ENCODE measurements at regions of chr3 and their contacts with region 1.

Region 1: DNA sequence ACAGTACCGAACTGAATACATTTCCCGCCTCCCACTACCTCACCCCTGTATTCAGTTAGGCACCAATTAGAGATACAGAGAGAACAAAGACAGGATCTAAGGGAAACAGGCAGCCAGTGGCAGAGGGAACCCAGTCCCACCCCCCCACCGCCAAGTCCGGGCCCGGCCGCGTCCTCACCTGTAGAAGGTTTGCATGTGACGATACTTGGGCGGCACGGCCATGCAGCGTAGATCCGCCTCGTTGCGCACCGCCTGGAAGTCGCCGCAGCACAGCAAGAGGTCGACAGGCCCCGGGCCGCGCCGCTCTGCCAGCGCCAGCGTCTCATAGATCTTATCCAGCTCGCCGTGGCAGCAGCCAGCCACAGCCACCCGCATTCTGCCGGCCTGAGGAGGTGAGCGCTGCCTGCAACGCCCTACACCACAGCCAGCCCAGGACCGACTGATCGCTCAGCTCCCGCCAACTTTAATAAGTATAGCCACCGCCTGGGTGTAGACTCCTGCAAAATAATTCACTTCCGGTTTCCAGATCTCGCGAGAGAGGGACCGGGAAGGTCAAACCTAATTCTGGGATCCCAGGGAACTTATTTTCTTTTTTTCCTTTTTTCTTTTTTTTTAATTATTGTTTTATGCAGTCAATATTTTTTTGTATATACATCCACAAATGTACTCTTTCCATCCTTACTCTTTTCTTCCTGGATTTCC is at the start of gene DBR1:
- DNase-seq: peak; percentile 83
- ATAC-seq: peak; percentile 93
- H3K4me3 ChIP-seq: peak within 1 kb of the TSS; percentile 73
- H3K27ac ChIP-seq: peak within 1 kb of the TSS; percentile 61
- H3K4me1 ChIP-seq: 0 out of 2 replicates have a peak, but pooled peaks cover 5% of the 10 kb centered on the region
- H3K27me3 ChIP-seq: no peaks in the 10 kb centered on the region
- CTCF ChIP-seq: no peak
- total RNA-seq, gene DBR1: 10.0 and 14.0 TPM in 2 replicates

Region 2: DNA sequence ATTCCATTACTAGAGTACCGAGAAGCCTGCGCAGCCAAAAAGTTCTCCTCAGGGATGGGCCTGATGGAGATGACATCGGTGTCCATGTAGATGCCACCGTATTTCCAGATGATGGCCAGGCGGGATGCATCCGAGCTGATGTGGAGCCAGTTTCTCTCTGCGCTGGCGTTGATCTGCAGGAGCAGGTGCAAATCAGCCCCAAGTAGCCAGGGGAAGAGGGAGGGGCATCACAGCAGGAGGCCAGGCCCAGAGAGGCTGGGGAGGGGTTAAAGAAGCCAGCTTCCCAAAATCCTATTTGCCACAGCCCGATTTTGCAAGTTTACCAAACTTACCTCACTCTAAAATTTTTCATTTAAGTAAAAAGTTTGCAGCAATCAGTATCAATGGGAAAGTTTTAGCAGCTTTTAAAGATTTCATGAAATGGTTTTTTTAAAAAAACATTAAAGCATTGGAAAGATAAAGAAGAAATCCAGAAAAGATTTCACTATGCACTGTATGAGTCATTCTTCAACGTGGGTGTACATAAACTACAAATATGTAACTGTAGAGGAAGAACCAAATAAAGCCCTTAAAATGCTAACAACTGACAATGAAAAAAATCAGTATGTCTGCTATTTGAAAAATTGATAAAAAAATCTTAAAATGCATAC is 49.7 kb before region 1 on chr3:
- CTCF ChIA-PET with region 1: no interaction called
- POLR2A ChIA-PET with region 1: interaction called, 10 read pairs
- intact Hi-C with region 1: no loop called
- DNase-seq: no peak
- ATAC-seq: peak; percentile 67
- H3K4me3 ChIP-seq: no peak overlapping the region
- H3K27ac ChIP-seq: no peak overlapping the region
- H3K4me1 ChIP-seq: no peaks in the 10 kb centered on the region
- H3K27me3 ChIP-seq: no peaks in the 10 kb centered on the region
- CTCF ChIP-seq: no peak

Region 3: DNA sequence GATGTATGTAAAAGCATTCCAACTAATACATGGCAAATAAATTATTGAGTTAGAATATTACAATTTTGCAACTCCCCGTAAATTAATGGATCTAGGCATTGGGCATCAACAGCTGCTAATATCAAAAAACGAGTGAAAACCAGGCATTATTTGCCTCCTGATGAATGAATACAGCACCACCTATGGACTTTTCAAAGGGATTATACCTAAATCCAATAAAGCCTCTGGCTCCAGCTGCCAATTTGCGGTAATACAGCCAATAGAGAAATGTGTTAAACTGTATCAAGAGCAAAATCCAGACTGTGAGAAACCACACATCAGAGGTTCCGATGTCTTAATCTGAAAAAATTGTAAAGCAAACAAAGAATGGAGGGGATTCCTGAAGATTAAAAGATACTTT is 26.1 kb before region 1 on chr3:
- CTCF ChIA-PET with region 1: no interaction called
- POLR2A ChIA-PET with region 1: interaction called, 16 read pairs
- intact Hi-C with region 1: no loop called
- DNase-seq: peak; percentile 3
- ATAC-seq: 0 out of 2 replicates have a peak, but pooled peaks have one; percentile 31
- H3K4me3 ChIP-seq: no peak overlapping the region
- H3K27ac ChIP-seq: no peak overlapping the region
- H3K4me1 ChIP-seq: no peaks in the 10 kb centered on the region
- H3K27me3 ChIP-seq: no peaks in the 10 kb centered on the region
- CTCF ChIP-seq: 0 out of 2 replicates have a peak, but pooled peaks have one; percentile 25

Region 4: DNA sequence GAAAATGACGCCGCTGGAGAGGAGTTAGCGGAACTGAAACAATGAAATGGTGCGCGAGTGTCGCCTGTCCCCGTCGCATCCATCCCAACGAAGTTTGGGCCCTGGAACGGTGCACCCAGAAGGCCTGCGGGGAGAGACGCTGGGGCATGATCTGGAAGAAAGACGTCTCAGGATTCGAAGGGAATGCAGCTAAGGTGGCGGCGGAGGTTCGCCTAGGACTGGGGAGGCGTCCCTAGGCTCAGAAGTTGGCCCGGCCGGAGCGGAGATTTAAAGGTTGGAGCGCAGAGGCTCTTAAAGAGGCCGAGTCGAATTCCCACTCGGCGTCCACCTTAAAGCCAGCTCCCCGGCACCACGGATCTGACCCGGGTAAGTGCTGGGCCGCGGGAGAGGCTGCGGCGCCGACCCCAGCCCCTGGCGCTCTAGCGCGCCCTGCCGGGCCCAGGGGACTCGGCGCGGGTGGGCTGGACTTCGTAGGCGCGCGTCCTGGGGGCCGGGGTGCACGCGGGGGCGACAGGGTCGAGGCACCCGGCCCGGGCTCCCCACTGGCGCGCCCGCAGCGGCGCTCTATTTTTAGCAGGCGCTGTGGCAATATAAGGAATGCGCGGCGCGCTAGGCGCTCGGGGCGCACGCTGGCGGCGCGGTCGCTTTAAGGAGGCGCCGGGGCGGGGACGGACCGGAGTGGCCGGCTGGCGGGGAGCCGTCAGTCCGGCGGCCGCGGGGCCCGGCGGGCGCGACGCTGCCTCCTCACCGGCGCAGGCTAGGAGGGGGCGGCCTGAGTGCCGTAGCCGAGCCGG is 173.6 kb after region 1 on chr3 and contains the start of gene MRAS:
- CTCF ChIA-PET with region 1: interaction called, 4 read pairs
- POLR2A ChIA-PET with region 1: no interaction called
- intact Hi-C with region 1: loop called (anchors 5 kb)
- DNase-seq: peak; percentile 57
- ATAC-seq: peak; percentile 78
- H3K4me3 ChIP-seq: peak within 1 kb of the TSS; percentile 84
- H3K27ac ChIP-seq: no peak within 1 kb of the TSS
- H3K4me1 ChIP-seq: no peaks in the 10 kb centered on the region
- H3K27me3 ChIP-seq: no peaks in the 10 kb centered on the region
- CTCF ChIP-seq: peak; percentile 39; the same call in 1 of the 2 replicates
- total RNA-seq, gene MRAS: 2.8 and 5.3 TPM in 2 replicates